HEK293 (cell line): ENCODE measurements at regions of chr11 and their contacts with region 1.

Region 1: DNA sequence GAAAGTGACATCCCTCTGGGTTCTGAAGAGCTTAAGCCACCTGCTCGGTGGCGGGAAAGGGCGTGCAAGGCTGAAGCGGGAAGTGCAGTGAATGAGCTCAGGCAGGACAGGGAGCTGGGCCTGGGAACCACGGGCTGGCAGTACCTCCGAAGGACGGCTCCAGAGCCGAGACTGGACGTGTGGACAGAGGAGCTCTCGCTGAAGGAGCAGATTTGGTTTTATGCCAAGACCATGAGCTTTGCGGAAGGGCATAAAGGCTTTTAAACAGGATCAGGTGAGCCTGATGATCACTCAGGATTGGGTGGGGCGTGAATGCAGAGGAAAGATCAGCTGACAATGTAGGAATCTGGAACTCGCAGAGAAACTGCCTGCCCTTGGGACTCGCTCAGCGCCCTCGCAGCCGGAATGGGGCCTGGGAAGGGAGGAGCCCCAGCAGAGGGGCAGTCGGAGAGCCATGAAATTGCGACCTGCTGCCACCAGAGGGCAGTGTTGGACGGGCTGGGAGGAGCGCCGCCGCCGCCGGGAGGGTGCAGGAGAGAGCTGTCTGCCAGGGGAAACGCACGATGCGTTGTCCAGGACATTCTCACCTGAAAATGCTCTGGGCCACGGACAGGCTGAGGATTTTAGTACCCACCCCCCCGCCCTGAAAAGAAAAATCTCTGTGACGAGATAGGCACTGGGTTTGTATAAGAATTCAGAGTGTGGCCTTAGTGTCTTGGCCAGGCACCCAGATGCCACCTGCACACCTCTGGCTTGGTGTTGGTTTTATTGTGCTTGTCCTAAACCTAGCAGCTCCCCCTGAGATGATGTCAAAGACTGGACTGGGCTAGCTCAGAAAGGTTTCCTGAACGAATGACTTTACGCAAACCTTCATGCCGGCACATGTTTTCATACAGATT is 324.4 kb downstream of the NTM start:
- H3K4me3 ChIP-seq: no peak overlapping the region
- H3K27ac ChIP-seq: no peak overlapping the region
- H3K4me1 ChIP-seq: no peaks in the 10 kb centered on the region; the same call in 1 of the 2 replicates
- CTCF ChIP-seq: peak; percentile 59

Region 2: GRCh38 chr11:131674051-131674755 is 20.6 kb before region 1 on chr11:
- CTCF ChIA-PET with region 1: interaction called, 16 read pairs
- POLR2A ChIA-PET with region 1: no interaction called
- H3K4me3 ChIP-seq: no peak overlapping the region
- H3K27ac ChIP-seq: no peak overlapping the region
- H3K4me1 ChIP-seq: no peaks in the 10 kb centered on the region
- CTCF ChIP-seq: peak; percentile 64

Region 3: DNA sequence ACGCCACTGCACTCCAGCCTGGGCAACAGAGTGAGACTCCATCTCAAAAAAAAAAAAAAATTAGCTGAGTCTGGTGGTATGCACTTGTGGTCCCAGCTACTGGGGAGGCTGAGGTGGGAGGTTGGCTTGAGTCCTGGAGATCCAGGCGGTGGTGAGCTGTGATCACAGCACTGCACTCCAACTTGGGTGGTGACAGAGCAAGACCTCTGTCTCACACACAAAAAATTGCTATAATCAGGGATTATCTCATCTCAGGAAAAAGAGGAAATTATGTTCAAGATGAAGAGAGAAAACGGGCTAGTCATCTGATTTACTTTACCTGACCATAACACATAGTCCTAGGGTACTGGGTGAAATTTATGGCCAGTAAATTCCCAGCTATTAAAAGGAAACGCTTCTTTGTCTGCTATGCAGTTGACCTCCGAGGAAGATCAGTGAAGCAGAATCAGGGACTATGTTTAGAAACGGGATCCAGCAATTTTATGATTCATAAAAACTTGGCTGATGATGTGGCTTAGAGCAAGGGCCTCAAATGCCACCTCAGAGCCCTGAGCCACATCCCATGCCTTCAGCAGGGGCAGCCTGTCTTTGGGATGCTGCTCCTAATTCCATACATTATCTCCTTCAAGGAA is 61.8 kb after region 1 on chr11:
- CTCF ChIA-PET with region 1: interaction called, 10 read pairs
- POLR2A ChIA-PET with region 1: no interaction called
- H3K4me3 ChIP-seq: no peak overlapping the region
- H3K27ac ChIP-seq: no peak overlapping the region
- H3K4me1 ChIP-seq: no peaks in the 10 kb centered on the region
- CTCF ChIP-seq: no peak

Region 4: GRCh38 chr11:131867457-131868257 is 172.9 kb after region 1 on chr11:
- CTCF ChIA-PET with region 1: interaction called, 11 read pairs
- POLR2A ChIA-PET with region 1: no interaction called
- H3K4me3 ChIP-seq: no peak overlapping the region
- H3K27ac ChIP-seq: no peak overlapping the region
- H3K4me1 ChIP-seq: no peaks in the 10 kb centered on the region; the same call in 1 of the 2 replicates
- CTCF ChIP-seq: peak; percentile 65; the same call in 1 of the 2 replicates

Region 5: GRCh38 chr11:133064152-133064877 is 1369.5 kb after region 1 on chr11:
- CTCF ChIA-PET with region 1: interaction called, 10 read pairs
- POLR2A ChIA-PET with region 1: no interaction called
- H3K4me3 ChIP-seq: peak overlapping the region; percentile 26
- H3K27ac ChIP-seq: no peak overlapping the region
- H3K4me1 ChIP-seq: no peaks in the 10 kb centered on the region
- CTCF ChIP-seq: no peak